Prostate gland (tissue), 2 donors: ENCODE measurements at regions of chr9 and their contacts with region 1.

Region 1: GRCh38 chr9:130265431-130266235 is at the start of gene HMCN2:
- DNase-seq: no peak
- H3K4me3 ChIP-seq: peak within 1 kb of the TSS; percentile 14 to 18
- H3K27ac ChIP-seq: peak within 1 kb of the TSS in 1 of 2 donors; percentile 30
- H3K4me1 ChIP-seq: peaks cover 10% of the 10 kb centered on the region
- H3K27me3 ChIP-seq: peaks cover 17% of the 10 kb centered on the region
- CTCF ChIP-seq: no peak
- POLR2A ChIP-seq: no peak
- total RNA-seq, gene HMCN2: 2.9 to 5.5 TPM

Region 2: GRCh38 chr9:129875181-129875611 is 390.4 kb before region 1 on chr9:
- intact Hi-C with region 1: no loop called
- DNase-seq: no peak
- H3K4me3 ChIP-seq: no peak overlapping the region
- H3K27ac ChIP-seq: no peak overlapping the region
- H3K4me1 ChIP-seq: no peaks in the 10 kb centered on the region
- H3K27me3 ChIP-seq: no peaks in the 10 kb centered on the region
- CTCF ChIP-seq: no peak
- POLR2A ChIP-seq: no peak

Region 3: GRCh38 chr9:130343445-130343918 is 77.8 kb after region 1 on chr9:
- intact Hi-C with region 1: loop called (anchors 5 kb)
- DNase-seq: no peak
- H3K4me3 ChIP-seq: no peak overlapping the region
- H3K27ac ChIP-seq: no peak overlapping the region
- H3K4me1 ChIP-seq: no peaks in the 10 kb centered on the region
- H3K27me3 ChIP-seq: no peaks in the 10 kb centered on the region
- CTCF ChIP-seq: peak; percentile 34 to 73 (median 66)
- POLR2A ChIP-seq: no peak